Esophagus muscularis mucosa (tissue), 4 donors: ENCODE measurements at regions of chr17 and their contacts with region 1.

Region 1: GRCh38 chr17:81142301-81143199 is 22.8 kb upstream of the PVALEF start:
- DNase-seq: no peak
- H3K4me3 ChIP-seq: peak overlapping the region in 1 of 4 donors; percentile 12
- H3K27ac ChIP-seq: no peak overlapping the region
- H3K4me1 ChIP-seq: peaks cover 9 to 18% (median 10%) of the 10 kb centered on the region in 4 donors
- H3K27me3 ChIP-seq: no peaks in the 10 kb centered on the region
- CTCF ChIP-seq: peak; percentile 71 to 74 (median 74)
- EP300 ChIP-seq: no peak
- POLR2A ChIP-seq: no peak

Region 2: GRCh38 chr17:81194941-81195901 is 52.7 kb after region 1 on chr17:
- intact Hi-C with region 1: loop called (anchors 5 kb)
- DNase-seq: no peak
- H3K4me3 ChIP-seq: no peak overlapping the region
- H3K27ac ChIP-seq: no peak overlapping the region
- H3K4me1 ChIP-seq: peaks cover 0 to 19% (median 7%) of the 10 kb centered on the region in 4 donors
- H3K27me3 ChIP-seq: no peaks in the 10 kb centered on the region
- CTCF ChIP-seq: no peak
- EP300 ChIP-seq: no peak
- POLR2A ChIP-seq: no peak

Region 3: GRCh38 chr17:81241648-81242420 is 99.3 kb after region 1 on chr17:
- intact Hi-C with region 1: loop called (anchors 1 kb)
- DNase-seq: no peak
- H3K4me3 ChIP-seq: no peak overlapping the region
- H3K27ac ChIP-seq: peak overlapping the region in 1 of 4 donors; percentile 18
- H3K4me1 ChIP-seq: peaks cover 18 to 46% (median 40%) of the 10 kb centered on the region in 4 donors
- H3K27me3 ChIP-seq: no peaks in the 10 kb centered on the region
- CTCF ChIP-seq: peak; percentile 69 to 84 (median 70)
- EP300 ChIP-seq: no peak
- POLR2A ChIP-seq: no peak

Region 4: DNA sequence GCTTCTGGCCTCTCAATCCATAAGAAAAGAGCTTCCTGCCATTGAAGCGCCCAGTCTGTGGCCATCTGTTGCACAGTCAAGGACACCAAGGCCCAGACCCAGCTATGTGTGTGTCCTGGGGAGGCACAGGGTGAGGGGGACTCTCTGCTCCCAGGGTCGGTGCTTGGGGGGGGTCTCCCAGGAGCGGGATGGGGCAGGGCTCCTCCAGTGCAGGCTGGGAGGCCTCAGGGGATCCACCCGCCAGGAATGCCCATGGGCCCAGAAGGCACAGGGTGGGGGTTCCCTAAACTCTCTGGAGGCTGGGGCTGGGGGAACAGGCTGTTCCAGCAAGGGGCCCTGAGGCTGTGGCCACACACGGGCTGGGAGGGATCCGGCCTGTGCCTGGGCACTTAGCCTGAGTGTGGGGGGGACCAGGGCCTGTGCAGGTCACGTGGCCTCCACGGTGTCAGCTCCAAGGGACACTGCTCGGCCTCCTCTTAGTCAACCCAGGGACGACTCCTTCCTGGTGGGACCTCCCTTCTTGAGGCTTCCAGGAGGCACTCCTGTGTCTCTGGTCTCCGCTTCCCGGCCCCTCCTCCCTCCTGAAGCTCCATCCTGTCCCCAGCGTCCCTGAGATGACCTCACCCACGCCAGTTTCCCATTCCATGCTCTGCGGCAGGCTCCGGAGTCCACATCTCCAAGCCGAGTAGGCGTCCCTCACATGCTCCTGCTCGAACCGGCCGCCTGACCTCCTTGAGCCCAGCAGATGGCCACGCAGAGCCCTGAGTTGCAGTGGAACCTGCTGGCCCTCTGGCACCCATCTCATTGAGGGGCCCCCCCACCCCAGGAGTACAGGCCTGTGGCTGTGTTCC is 229.6 kb after region 1 on chr17:
- intact Hi-C with region 1: no loop called
- DNase-seq: no peak
- H3K4me3 ChIP-seq: no peak overlapping the region
- H3K27ac ChIP-seq: peak overlapping the region; percentile 17 to 68 (median 20)
- H3K4me1 ChIP-seq: peaks cover 11 to 21% (median 12%) of the 10 kb centered on the region in 4 donors
- H3K27me3 ChIP-seq: peaks cover 0 to 7% (median 0%) of the 10 kb centered on the region in 4 donors
- CTCF ChIP-seq: peak in 2 of 3 experiments; percentile 10 to 24
- EP300 ChIP-seq: no peak
- POLR2A ChIP-seq: no peak